A673 (cell line): ENCODE measurements at regions of chr7 and their contacts with region 1.

Region 1: DNA sequence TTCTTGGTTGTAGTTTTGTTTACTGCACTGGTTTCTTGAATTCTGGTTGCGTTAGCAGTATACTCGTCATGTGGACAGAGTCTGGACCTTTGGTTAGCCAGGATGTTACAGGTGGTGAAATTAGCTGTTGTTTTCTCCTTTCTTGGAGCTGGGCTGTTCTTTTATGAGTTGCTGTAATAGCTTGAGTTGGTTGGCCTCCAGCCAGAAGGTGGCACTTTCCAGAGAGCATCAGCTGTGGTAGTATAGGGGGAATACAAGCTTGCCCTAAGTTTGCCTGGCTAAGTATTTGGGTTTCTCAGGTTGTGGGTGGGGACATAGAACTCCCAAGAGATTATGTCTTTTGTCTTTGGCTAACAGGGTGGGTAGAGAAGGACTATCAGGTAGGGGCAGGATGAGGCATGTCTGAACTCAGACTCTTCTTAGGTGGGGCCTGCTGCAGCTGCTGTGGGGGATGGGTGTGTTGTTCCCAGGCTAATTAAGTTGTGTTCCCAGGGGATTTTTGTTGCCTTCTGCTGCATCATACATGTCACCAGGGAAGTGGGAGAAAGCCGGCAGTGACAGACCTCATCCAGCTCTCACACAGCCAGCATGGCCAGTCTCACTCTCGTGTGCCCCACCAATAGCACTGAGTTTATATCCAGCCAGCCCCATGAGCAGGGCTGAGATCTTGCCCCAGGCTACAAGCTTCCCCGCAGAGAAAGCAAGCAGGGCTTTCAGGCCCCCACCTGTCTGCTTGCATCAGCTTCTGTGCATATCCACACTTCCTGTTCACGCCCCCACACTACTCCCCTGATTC is 246.7 kb upstream of the TPK1 start:
- DNase-seq: peak; percentile 25
- H3K4me3 ChIP-seq: no peak overlapping the region
- H3K27ac ChIP-seq: peak overlapping the region; percentile 54
- H3K4me1 ChIP-seq: peaks cover 14% of the 10 kb centered on the region
- H3K27me3 ChIP-seq: no peaks in the 10 kb centered on the region
- CTCF ChIP-seq: no peak

Region 2: GRCh38 chr7:145106001-145106400 is 23.4 kb after region 1 on chr7:
- CTCF ChIA-PET with region 1: no interaction called
- POLR2A ChIA-PET with region 1: interaction called, 16 read pairs
- intact Hi-C with region 1: no loop called
- DNase-seq: peak; percentile 7
- H3K4me3 ChIP-seq: no peak overlapping the region
- H3K27ac ChIP-seq: peak overlapping the region; percentile 24
- H3K4me1 ChIP-seq: no peaks in the 10 kb centered on the region
- H3K27me3 ChIP-seq: no peaks in the 10 kb centered on the region
- CTCF ChIP-seq: no peak